Colonic mucosa (tissue), 4 donors: ENCODE measurements at regions of chr2 and their contacts with region 1.

Region 1: DNA sequence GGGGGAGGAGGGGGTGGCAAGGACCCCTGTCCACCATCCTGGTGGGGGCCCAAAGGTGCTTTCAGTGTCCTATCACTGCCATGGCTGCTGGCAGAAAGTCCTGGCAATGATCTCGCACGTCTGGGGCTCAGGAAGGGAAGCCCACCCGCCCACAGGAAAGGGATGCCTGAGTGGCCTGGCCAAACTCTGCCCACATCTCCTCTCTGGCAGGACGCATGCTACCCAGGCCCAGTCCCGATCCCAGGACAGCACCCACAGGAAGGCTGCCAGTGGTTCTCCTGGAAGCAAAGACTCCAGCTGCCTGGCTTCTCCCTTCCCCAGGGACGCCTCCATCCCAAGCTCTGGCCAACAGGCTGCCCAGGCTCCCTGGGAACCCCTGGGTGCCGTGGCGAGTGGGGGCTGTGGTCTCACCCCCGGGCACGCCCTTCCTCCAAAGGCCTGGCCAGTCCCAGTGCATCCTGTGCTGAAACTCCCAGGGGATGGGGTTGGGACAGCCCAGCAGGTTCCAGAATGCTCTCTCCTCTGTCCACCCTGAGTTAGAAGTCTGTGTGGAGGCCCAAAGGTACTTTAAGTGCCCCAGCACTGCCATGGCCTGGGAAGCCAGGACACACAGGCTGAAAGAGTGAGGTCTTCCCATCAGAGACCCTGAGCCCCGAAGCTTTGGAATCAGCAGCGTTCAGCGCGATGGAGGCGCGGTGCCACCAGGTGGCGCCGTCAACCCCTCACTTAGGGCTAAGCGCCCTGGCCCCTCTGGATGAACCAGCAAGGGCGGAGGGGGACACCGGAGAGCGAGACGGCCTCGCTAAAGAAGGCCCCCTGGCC is 29.8 kb upstream of the TAF1B start:
- DNase-seq: peak; percentile 73
- H3K4me3 ChIP-seq: no peak overlapping the region
- H3K27ac ChIP-seq: no peak overlapping the region
- H3K4me1 ChIP-seq: peaks cover 11% of the 10 kb centered on the region
- H3K27me3 ChIP-seq: no peaks in the 10 kb centered on the region
- CTCF ChIP-seq: peak; percentile 96

Region 2: DNA sequence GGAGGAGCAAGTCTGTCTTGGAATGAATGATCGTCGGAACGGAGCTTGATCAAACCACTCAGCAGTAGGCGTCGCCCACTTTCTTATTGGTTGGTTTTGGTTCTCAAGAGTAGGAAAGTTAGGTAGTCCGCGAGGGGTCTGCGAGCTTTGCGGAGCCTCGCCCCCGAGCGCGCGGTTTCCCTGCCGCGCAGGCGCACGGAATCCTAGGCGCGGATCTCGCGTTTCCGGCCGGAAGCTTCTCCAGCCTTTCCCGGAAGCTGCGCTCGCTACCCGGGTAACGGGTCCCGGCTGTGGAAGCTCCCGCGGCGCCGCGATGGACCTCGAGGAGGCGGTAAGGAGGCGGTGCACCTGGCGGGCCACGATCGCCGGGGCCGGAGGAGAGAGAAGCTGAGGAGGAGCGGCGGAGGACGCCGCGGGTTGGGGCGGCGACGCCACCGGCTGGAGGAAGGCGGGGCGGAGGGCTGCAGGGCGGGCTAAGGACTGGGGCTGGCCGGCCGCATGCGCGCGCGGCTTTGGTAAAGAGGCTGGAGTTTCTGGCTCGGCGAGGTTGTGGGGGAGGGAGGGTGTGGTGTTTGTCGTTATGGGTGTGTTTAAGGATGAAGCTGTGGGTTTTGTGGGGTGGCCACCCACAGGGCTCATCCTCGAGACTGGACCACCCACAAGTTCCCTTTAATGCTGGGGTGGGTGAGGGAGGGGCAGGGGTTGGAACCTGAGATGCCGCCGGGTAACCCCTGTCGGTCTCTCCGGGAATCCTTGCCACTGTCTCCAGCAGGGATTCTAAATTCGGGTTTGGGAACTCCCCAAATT is 29.9 kb after region 1 on chr2 and contains the start of gene TAF1B:
- intact Hi-C with region 1: loop called (anchors 1 kb)
- DNase-seq: peak; percentile 92
- H3K4me3 ChIP-seq: peak within 1 kb of the TSS; percentile 66
- H3K27ac ChIP-seq: peak within 1 kb of the TSS; percentile 87
- H3K4me1 ChIP-seq: no peaks in the 10 kb centered on the region
- H3K27me3 ChIP-seq: no peaks in the 10 kb centered on the region
- CTCF ChIP-seq: no peak
- total RNA-seq, gene TAF1B: 8.8 to 13.0 TPM

Region 3: DNA sequence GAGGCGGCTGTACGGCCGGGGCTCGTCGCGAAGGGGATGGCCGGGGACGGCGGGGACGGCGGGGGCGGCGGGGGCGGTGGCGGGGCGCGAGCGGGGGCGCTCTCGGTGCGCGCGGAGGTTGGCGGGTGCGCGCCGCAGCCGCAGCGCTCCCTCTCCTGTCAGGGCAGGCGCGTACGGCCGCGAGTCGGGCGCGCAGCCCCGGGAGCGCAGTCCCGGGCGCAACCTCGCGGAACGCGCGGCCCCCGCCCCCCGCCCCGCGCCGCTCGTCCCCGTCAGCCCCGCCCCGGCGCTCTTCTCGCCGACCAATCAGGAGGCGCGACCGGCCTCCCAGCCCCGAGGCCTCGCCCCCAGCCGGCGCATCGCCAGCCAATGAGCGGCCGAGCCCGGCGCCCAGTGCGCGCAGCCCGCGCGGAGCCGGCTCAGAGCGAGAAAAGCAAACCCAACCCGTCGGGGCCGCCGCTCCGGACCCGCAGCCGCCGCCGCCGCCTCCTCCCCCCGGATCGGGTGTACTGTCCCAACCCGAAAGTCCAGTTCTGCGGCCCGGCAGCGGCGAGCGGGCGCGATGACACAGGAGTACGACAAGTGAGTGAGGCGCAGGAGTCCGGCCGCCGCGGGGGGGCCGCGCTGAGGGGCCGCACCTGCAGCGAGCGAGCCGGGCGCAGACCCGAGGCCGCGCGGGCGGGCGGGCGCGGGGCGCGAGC is 137.9 kb after region 1 on chr2 and contains the start of gene GRHL1:
- intact Hi-C with region 1: loop called (anchors 10 kb)
- DNase-seq: peak; percentile 93
- H3K4me3 ChIP-seq: peak within 1 kb of the TSS; percentile 65
- H3K27ac ChIP-seq: no peak within 1 kb of the TSS
- H3K4me1 ChIP-seq: no peaks in the 10 kb centered on the region
- H3K27me3 ChIP-seq: no peaks in the 10 kb centered on the region
- CTCF ChIP-seq: no peak
- total RNA-seq, gene GRHL1: 1.6 to 1.9 TPM

Region 4: GRCh38 chr2:10048501-10049171 is 235.1 kb after region 1 on chr2:
- intact Hi-C with region 1: loop called (anchors 5 kb)
- DNase-seq: peak; percentile 31
- H3K4me3 ChIP-seq: no peak overlapping the region
- H3K27ac ChIP-seq: no peak overlapping the region
- H3K4me1 ChIP-seq: no peaks in the 10 kb centered on the region
- H3K27me3 ChIP-seq: no peaks in the 10 kb centered on the region
- CTCF ChIP-seq: peak; percentile 58

Region 5: DNA sequence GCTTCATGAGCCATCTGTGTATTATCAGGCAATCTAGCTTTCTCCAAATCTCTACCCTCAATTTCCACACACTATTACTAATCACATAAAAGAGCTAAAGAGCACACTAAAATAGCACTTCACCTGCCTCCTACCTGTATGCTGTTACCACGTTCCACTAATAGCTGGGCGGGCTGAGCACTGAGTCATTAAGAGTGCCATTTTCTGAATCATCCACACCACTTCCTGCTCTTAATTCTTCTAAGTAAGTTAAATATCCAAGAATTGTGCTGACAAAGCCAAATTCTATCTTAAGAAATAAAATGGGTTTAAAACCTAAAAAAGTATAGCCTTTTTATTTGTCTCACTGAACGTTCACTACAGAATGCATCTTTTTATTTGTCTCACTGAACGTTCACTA is 840.5 kb after region 1 on chr2:
- intact Hi-C with region 1: no loop called
- DNase-seq: no peak
- H3K4me3 ChIP-seq: no peak overlapping the region
- H3K27ac ChIP-seq: no peak overlapping the region
- H3K4me1 ChIP-seq: no peaks in the 10 kb centered on the region
- H3K27me3 ChIP-seq: no peaks in the 10 kb centered on the region
- CTCF ChIP-seq: no peak